ENCODE measurements at regions of chr14 and their contacts with region 1.

Region 1: DNA sequence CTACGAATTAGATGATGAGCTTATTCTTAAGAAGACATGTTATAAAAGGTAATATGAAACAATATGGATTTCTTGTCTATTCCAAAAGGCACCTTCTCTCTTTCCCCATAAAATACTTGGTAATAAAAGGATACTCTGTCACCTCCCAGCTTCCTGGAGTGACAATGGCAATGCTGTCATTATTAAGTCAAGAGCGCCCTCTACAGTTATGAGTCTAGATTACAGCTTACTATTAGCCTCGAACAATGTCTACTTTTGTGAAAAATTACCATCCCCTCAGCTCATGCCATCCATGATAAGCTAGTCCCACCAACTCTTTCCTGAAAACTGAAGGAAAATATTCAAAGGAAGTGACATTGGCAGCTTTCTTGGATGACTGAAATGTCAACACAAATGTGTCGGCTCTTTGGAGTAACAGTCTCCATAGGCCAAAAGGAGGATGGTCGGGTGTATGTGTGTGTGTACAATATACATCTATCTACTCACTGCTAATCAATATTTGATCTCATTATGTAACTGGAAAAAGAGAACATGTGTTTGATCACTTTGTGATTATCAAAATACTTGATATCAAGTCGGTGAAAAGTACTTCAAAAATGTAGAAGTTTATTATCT is 48.7 kb upstream of the CDKN3 start:
- DNase-seq: no peak
- ATAC-seq: peak; percentile 78
- H3K4me3 ChIP-seq: no peak overlapping the region
- H3K27ac ChIP-seq: no peak overlapping the region
- H3K4me1 ChIP-seq: no peaks in the 10 kb centered on the region
- H3K27me3 ChIP-seq: no peaks in the 10 kb centered on the region
- CTCF ChIP-seq: peak; percentile 60 to 79 (median 70)
- EP300 ChIP-seq: no peak
- POLR2A ChIP-seq: no peak
- RAD21 ChIP-seq: peak; percentile 87

Region 2: DNA sequence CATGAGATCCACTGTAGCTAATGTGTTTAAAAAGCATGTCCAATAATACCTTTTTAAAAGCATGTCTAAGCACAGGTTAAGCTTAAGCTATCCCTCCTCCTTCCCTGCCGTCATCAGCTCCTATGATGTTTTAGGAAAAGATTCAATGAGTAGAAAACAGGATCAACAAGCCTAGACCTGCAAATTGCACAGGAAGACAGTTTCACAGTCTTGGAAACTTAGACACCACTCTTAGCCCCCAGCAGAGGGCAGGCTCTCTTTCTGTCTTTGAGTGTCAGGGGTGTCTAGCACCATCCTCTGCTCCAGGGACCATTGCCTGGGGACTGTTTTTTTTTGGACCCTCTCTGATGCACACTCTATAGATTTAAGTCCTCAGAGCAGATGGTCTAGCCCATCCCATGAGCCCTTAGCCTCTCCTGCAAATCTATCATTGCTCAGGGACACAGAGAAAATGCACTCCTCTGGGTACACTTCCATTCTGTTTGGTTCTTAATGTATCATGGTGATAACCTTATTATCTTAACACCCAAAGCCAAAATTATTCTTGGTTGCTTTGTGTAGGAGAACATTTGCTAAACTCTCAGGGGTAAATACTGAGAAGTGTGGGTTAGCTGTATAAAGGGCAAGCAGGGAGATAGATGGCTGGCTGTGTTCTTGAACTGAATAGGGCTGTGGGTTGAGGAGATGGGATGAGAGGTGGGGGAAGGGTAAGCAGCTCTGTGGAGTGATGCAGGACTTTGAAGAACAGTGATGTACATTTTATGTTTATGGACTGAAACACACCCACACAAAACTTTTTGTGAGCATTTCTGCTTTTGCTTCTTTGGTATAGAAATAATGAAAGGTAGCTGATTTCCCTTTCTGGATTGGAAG is 935.1 kb before region 1 on chr14:
- CTCF ChIA-PET with region 1: interaction called, 10 read pairs
- POLR2A ChIA-PET with region 1: no interaction called
- RAD21 ChIA-PET with region 1: interaction called, 4 read pairs
- SMC1A ChIA-PET with region 1: no interaction called
- in situ Hi-C with region 1: no loop called
- intact Hi-C with region 1: no loop called
- DNase-seq: no peak
- ATAC-seq: peak; percentile 47; the same call in 1 of the 3 replicates
- H3K4me3 ChIP-seq: no peak overlapping the region
- H3K27ac ChIP-seq: no peak overlapping the region
- H3K4me1 ChIP-seq: no peaks in the 10 kb centered on the region
- H3K27me3 ChIP-seq: no peaks in the 10 kb centered on the region
- CTCF ChIP-seq: peak; percentile 34 to 43 (median 38); a peak in 5 of 6 replicates
- EP300 ChIP-seq: no peak
- POLR2A ChIP-seq: no peak
- RAD21 ChIP-seq: peak; percentile 38

Region 3: DNA sequence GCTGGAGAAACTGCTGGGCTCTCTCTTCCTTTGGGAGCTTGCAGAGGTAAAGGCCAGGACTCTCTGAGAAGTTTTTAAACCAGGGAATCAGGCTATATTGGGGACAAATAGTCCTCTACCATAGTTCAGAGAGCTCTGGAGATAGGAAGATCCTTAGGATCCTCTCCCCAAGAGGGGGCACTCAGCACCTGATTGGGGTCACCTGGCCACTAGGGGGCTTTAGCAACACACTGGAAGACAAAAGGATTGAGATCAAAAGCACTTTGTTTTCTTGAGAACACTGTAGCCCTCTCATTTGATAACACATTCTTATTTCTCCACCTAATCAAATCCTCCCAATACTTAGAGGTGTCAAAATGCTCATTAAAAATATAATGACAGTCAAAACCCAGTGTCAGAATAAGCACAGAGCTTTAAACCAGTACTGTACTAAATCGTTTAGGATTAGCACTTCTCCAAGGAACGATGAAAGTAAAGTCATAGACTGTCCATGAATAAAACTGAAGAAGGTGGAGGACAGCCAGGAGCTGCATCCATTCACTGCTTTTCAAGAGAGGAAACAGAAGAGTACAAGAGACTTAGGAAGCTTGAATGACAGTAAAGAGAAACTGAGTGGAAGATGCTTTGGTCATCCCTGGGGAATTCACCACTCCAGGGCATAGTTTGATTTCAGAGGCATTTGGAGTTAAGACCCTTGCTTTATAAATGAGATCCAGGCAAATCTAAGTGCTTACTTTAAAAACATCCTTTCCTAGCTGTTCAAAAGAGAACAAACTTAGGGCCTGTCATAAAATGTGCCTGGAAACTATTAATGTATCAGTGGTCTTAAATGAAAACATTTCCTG is 418.0 kb before region 1 on chr14:
- CTCF ChIA-PET with region 1: interaction called, 18 read pairs
- POLR2A ChIA-PET with region 1: no interaction called
- RAD21 ChIA-PET with region 1: interaction called, 3 read pairs
- SMC1A ChIA-PET with region 1: no interaction called
- in situ Hi-C with region 1: no loop called
- intact Hi-C with region 1: no loop called
- DNase-seq: no peak
- ATAC-seq: peak; percentile 54; the same call in 2 of the 3 replicates
- H3K4me3 ChIP-seq: no peak overlapping the region
- H3K27ac ChIP-seq: no peak overlapping the region
- H3K4me1 ChIP-seq: no peaks in the 10 kb centered on the region
- H3K27me3 ChIP-seq: no peaks in the 10 kb centered on the region; a peak in 1 of 4 replicates
- CTCF ChIP-seq: peak; percentile 60 to 71 (median 68)
- EP300 ChIP-seq: no peak
- POLR2A ChIP-seq: no peak
- RAD21 ChIP-seq: peak; percentile 59

Region 4: GRCh38 chr14:54329082-54329695 is 18.9 kb before region 1 on chr14:
- CTCF ChIA-PET with region 1: interaction called, 15 read pairs
- POLR2A ChIA-PET with region 1: no interaction called
- RAD21 ChIA-PET with region 1: interaction called, 11 read pairs
- SMC1A ChIA-PET with region 1: interaction called, 11 read pairs
- in situ Hi-C with region 1: no loop called
- intact Hi-C with region 1: no loop called
- DNase-seq: no peak
- ATAC-seq: peak; percentile 86
- H3K4me3 ChIP-seq: no peak overlapping the region
- H3K27ac ChIP-seq: no peak overlapping the region
- H3K4me1 ChIP-seq: no peaks in the 10 kb centered on the region
- H3K27me3 ChIP-seq: no peaks in the 10 kb centered on the region; a peak in 1 of 4 replicates
- CTCF ChIP-seq: peak; percentile 75 to 86 (median 79)
- EP300 ChIP-seq: no peak
- POLR2A ChIP-seq: no peak
- RAD21 ChIP-seq: peak; percentile 87

Region 5: GRCh38 chr14:54627540-54628363 is 279.6 kb after region 1 on chr14:
- CTCF ChIA-PET with region 1: no interaction called
- POLR2A ChIA-PET with region 1: no interaction called
- RAD21 ChIA-PET with region 1: no interaction called
- SMC1A ChIA-PET with region 1: no interaction called
- in situ Hi-C with region 1: no loop called
- intact Hi-C with region 1: no loop called
- DNase-seq: peak; percentile 57
- ATAC-seq: peak; percentile 82
- H3K4me3 ChIP-seq: peak overlapping the region; percentile 39; the same call in 1 of the 2 replicates
- H3K27ac ChIP-seq: peak overlapping the region; percentile 51
- H3K4me1 ChIP-seq: peaks cover 19% of the 10 kb centered on the region
- H3K27me3 ChIP-seq: no peaks in the 10 kb centered on the region
- CTCF ChIP-seq: no peak
- EP300 ChIP-seq: 0 out of 4 replicates have a peak, but pooled peaks of 1 of the 2 experiments have one; percentile 35
- POLR2A ChIP-seq: no peak
- RAD21 ChIP-seq: no peak

Region 6: GRCh38 chr14:54893151-54893760 is 545.2 kb after region 1 on chr14:
- CTCF ChIA-PET with region 1: no interaction called
- POLR2A ChIA-PET with region 1: no interaction called
- RAD21 ChIA-PET with region 1: no interaction called
- SMC1A ChIA-PET with region 1: no interaction called
- in situ Hi-C with region 1: no loop called
- intact Hi-C with region 1: no loop called
- DNase-seq: no peak
- ATAC-seq: peak; percentile 68
- H3K4me3 ChIP-seq: no peak overlapping the region
- H3K27ac ChIP-seq: no peak overlapping the region
- H3K4me1 ChIP-seq: peaks cover 25% of the 10 kb centered on the region
- H3K27me3 ChIP-seq: no peaks in the 10 kb centered on the region
- CTCF ChIP-seq: peak; percentile 55 to 78 (median 67)
- EP300 ChIP-seq: no peak
- POLR2A ChIP-seq: no peak
- RAD21 ChIP-seq: peak; percentile 53

Measured in GM12878 (cell line).